ENCODE measurements at regions of chr18 and their contacts with region 1.

Region 1: GRCh38 chr18:51051105-51051712 is 21.2 kb downstream of the SMAD4 start:
- DNase-seq: peak; percentile 33
- ATAC-seq: peak; percentile 92
- H3K4me3 ChIP-seq: no peak overlapping the region
- H3K27ac ChIP-seq: no peak overlapping the region
- H3K4me1 ChIP-seq: no peaks in the 10 kb centered on the region
- H3K27me3 ChIP-seq: no peaks in the 10 kb centered on the region; a peak in 1 of 5 replicates
- CTCF ChIP-seq: peak; percentile 73
- EP300 ChIP-seq: no peak
- POLR2A ChIP-seq: no peak
- RAD21 ChIP-seq: peak; percentile 43; the same call in 1 of the 2 replicates

Region 2: GRCh38 chr18:50819728-50820378 is 231.4 kb before region 1 on chr18 and contains the start of gene MRO:
- CTCF ChIA-PET with region 1: interaction called, 37 read pairs
- POLR2A ChIA-PET with region 1: no interaction called
- in situ Hi-C with region 1: no loop called
- intact Hi-C with region 1: loop called (anchors 1 kb)
- DNase-seq: peak; percentile 58
- ATAC-seq: peak; percentile 97
- H3K4me3 ChIP-seq: peak within 1 kb of the TSS in 2 of 3 experiments; percentile 21 to 38; a peak in 4 of 6 replicates
- H3K27ac ChIP-seq: no peak within 1 kb of the TSS
- H3K4me1 ChIP-seq: peaks cover 19% of the 10 kb centered on the region
- H3K27me3 ChIP-seq: peaks cover 0 to 6% of the 10 kb centered on the region in 2 experiments; a peak in 1 of 5 replicates
- CTCF ChIP-seq: peak; percentile 98
- EP300 ChIP-seq: no peak
- POLR2A ChIP-seq: no peak
- RAD21 ChIP-seq: peak; percentile 93
- total RNA-seq, gene MRO: not detected in 2 replicates

Region 3: DNA sequence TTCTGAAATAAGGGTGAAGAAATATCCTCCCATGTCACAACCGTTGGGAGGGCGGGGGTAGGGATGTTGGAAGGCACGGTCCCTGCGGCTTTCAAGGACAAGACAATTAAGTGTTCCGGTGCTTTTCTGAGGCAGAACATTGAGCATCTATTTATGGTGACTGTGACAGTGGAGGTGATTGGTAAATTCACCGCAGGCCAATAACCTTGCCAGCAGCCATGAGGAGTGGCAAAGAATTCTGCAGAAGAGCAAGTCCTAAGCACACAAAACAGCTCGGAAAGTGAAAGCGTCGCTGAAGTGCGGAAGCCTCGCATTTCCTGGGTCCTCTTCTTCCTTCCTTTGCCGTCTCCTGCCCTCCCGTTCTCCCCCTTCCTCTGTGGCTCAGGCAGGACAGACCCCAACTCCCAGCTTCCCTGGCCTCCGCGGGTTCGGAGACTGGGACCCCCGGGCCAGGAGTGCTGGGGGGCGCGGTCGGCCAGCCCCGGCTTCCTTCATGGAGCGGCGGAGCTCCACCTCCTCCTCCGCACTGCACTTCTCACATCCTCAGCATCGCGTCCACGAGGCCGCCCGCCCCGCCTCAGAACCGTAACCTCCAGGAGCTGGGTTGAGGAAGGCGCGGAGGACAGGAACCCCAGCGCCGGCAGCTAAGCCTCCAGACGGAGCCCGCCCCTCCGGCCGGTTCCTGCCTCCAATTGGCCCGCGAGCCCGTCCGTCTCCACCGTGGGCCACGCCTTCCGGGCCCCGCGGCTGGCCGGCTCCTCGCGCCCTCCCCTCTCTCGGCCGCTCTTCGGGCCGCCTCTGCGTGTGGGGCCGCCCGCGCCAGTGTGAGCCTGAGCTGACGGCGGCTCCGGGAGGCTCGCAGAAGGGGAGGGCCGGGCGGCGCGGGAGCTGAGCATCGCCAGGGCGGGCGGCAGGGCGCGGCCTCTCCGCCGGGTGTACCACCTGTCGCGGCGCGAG is 172.6 kb before region 1 on chr18 and contains the start of gene ME2:
- CTCF ChIA-PET with region 1: no interaction called
- POLR2A ChIA-PET with region 1: no interaction called
- in situ Hi-C with region 1: no loop called
- intact Hi-C with region 1: loop called (anchors 5 kb)
- DNase-seq: peak; percentile 72
- ATAC-seq: peak; percentile 98
- H3K4me3 ChIP-seq: peak within 1 kb of the TSS; percentile 81 to 94 (median 90)
- H3K27ac ChIP-seq: peak within 1 kb of the TSS; percentile 70
- H3K4me1 ChIP-seq: peaks cover 32% of the 10 kb centered on the region
- H3K27me3 ChIP-seq: no peaks in the 10 kb centered on the region
- CTCF ChIP-seq: no peak
- EP300 ChIP-seq: no peak
- POLR2A ChIP-seq: peak; percentile 40 to 78; a peak in 3 of 4 replicates
- RAD21 ChIP-seq: no peak
- total RNA-seq, gene ME2: 20.6 and 28.2 TPM in 2 replicates

Region 4: DNA sequence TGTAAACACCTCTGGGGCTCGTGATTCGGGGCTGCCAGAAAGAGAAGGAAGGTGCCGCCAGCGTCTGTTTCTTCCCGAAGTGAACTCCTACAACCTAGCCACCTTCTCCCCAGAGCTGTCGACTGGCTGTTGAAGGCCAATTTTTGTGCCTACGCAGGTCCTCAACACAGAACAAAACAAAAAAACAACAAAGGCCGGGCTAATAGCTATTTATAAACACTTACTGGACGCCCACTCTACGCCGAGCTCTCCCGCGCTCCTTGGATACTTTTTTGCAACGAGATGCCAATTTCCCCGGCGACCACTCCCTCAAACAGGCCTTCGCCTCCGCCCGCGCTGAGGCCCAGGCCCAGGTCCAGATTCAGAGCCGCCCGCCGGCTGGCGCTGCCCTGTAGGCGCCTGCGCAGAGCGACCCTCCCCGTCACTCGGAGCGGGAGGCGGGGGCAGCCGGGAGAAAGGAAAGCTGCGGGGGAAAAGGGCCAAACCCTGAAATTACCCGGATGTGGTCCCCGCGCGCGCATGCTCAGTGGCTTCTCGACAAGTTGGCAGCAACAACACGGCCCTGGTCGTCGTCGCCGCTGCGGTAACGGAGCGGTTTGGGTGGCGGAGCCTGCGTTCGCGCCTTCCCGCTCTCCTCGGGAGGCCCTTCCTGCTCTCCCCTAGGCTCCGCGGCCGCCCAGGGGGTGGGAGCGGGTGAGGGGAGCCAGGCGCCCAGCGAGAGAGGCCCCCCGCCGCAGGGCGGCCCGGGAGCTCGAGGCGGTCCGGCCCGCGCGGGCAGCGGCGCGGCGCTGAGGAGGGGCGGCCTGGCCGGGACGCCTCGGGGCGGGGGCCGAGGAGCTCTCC is 21.3 kb before region 1 on chr18 and contains the start of gene SMAD4:
- CTCF ChIA-PET with region 1: no interaction called
- POLR2A ChIA-PET with region 1: no interaction called
- in situ Hi-C with region 1: no loop called
- intact Hi-C with region 1: loop called (anchors 1 kb)
- DNase-seq: peak; percentile 89
- ATAC-seq: peak; percentile 91
- H3K4me3 ChIP-seq: peak within 1 kb of the TSS; percentile 83 to 91 (median 91)
- H3K27ac ChIP-seq: peak within 1 kb of the TSS; percentile 94
- H3K4me1 ChIP-seq: peaks cover 53% of the 10 kb centered on the region
- H3K27me3 ChIP-seq: no peaks in the 10 kb centered on the region; a peak in 1 of 5 replicates
- CTCF ChIP-seq: no peak; the same call in 1 of the 2 replicates
- EP300 ChIP-seq: no peak
- POLR2A ChIP-seq: peak; percentile 94 to 97
- RAD21 ChIP-seq: peak; percentile 35; the same call in 1 of the 2 replicates
- total RNA-seq, gene SMAD4: 72.0 and 99.1 TPM in 2 replicates